PC-9 (cell line): ENCODE measurements at regions of chr13 and their contacts with region 1.

Region 1: DNA sequence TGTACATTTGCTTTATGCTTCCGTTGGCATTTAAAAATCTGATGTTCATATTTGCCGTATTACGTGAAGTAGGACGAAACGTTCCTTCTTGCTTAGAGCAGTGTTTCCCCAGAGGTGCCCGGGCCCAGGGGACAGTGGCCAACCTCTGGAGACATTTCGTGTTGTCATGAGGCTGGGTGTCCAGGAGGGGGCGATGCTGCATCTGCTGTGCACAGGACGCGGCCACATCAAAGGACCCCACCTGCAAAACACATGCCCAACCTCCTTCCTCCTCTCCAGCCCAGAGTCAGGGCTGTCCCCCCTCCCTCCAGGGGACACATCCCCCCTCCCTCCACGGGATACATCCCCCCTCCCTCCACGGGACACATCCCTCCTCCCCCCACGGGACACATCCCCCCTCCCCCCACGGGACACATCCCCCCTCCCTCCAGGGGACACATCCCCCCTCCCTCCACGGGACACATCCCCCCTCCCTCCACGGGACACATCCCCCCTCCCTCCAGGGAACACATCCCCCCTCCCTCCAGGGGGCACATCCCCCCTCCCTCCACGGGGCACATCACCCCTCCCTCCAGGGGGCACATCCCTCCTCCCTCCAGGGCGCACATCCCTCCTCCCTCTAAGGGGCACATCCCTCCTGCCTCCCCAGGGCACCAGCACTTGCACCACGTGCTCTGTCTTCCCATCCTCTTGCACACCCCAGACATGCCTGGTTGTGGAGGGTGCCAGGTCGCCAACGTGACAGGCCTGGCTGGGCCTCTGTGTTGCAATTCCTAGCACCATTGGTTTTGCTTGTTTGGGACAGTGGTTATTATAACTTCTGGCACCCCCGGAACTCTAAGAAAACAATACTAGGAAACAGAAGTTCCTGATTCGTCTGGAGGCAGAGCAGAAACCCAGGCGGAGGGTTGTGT is 46.7 kb downstream of the GAS6 start:
- DNase-seq: peak; percentile 68 to 83
- H3K4me3 ChIP-seq: no peak overlapping the region
- H3K27ac ChIP-seq: no peak overlapping the region
- H3K4me1 ChIP-seq: peaks cover 41% of the 10 kb centered on the region
- H3K27me3 ChIP-seq: no peaks in the 10 kb centered on the region
- CTCF ChIP-seq: peak; percentile 92

Region 2: DNA sequence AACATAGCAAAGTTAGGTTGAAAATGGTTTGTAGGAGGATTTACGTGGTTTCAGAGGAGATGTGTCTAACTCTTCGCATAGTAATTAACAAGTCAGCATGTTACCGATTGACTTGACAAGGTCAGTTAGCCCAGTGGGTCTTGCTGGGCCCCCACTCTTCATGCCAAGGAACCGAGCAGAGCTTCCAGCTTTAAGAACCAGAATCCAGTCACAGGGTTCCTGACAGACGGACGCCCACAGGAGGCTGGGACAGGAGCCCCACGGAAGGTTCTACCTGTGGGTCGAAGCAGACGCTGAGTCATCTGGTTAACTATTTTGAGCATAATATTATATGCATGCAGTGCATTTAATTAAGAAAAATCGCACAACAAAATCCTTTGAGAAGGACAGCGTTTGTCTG is 54.7 kb before region 1 on chr13:
- CTCF ChIA-PET with region 1: no interaction called
- POLR2A ChIA-PET with region 1: no interaction called
- intact Hi-C with region 1: no loop called
- DNase-seq: no peak
- H3K4me3 ChIP-seq: no peak overlapping the region
- H3K27ac ChIP-seq: no peak overlapping the region
- H3K4me1 ChIP-seq: 0 out of 2 replicates have a peak, but pooled peaks cover 7% of the 10 kb centered on the region
- H3K27me3 ChIP-seq: peaks cover 79% of the 10 kb centered on the region
- CTCF ChIP-seq: no peak

Region 3: DNA sequence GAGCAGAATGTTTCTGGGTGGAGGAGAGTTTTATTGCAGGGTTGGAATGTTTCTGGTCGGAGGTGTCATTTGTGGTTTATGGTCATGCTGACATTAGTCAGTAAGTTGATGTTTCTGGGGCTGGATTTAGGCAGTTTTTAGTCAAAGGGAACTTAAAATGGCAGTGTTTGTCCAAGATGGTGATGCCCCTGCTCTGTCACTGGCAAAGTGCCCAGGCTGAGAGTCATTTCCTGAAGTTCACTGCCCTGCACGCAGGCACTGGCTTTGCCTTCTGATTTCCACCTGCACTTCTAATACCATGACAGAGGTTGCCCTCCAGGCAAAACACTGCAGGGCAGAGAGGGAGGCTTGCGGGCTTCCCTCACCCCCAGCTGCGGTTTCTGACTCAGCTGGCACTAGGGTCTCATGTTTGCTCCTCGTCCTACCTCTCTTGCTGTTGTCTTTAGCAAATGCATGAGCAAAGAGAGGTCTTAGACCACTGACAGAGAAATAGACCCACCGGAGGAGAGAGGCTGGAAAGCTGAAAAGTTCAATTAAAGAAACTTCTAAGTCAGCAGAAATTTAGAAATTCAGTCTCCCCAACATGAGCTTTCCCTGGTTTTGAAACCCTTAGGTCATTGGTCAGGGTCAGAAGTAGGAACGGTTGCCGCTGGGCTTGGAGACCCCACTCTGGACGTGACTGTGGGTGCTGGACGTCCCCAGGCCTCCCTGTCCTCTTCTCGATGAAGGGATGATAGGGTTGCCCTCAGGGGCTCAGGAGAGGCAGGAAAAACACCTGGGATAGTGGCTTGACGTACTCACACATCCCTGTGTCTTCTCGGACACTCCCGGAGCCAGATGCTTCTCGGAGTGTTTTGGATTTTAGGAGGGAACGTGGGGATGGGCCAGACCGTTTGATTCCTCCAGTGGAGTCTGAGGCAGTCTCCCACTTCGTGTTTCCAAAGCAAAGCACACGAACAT is 31.9 kb before region 1 on chr13:
- CTCF ChIA-PET with region 1: no interaction called
- POLR2A ChIA-PET with region 1: no interaction called
- intact Hi-C with region 1: loop called (anchors 2 kb)
- DNase-seq: peak; percentile 78 to 88
- H3K4me3 ChIP-seq: peak overlapping the region; percentile 12; the same call in 1 of the 2 replicates
- H3K27ac ChIP-seq: peak overlapping the region; percentile 62
- H3K4me1 ChIP-seq: peaks cover 29% of the 10 kb centered on the region
- H3K27me3 ChIP-seq: 0 out of 2 replicates have a peak, but pooled peaks cover 4% of the 10 kb centered on the region
- CTCF ChIP-seq: no peak

Region 4: GRCh38 chr13:113863436-113864272 is 46.5 kb after region 1 on chr13 and contains the start of gene GAS6:
- CTCF ChIA-PET with region 1: no interaction called
- POLR2A ChIA-PET with region 1: interaction called, 3 read pairs
- intact Hi-C with region 1: loop called (anchors 5 kb)
- DNase-seq: peak in 1 of 2 experiments; percentile 60
- H3K4me3 ChIP-seq: peak within 1 kb of the TSS; percentile 57
- H3K27ac ChIP-seq: no peak within 1 kb of the TSS
- H3K4me1 ChIP-seq: peaks cover 13% of the 10 kb centered on the region; the same call in 1 of the 2 replicates
- H3K27me3 ChIP-seq: peaks cover 10% of the 10 kb centered on the region; the same call in 1 of the 2 replicates
- CTCF ChIP-seq: no peak; the same call in 1 of the 2 replicates
- total RNA-seq, gene GAS6: 92.9 and 93.8 TPM in 2 replicates

Region 5: DNA sequence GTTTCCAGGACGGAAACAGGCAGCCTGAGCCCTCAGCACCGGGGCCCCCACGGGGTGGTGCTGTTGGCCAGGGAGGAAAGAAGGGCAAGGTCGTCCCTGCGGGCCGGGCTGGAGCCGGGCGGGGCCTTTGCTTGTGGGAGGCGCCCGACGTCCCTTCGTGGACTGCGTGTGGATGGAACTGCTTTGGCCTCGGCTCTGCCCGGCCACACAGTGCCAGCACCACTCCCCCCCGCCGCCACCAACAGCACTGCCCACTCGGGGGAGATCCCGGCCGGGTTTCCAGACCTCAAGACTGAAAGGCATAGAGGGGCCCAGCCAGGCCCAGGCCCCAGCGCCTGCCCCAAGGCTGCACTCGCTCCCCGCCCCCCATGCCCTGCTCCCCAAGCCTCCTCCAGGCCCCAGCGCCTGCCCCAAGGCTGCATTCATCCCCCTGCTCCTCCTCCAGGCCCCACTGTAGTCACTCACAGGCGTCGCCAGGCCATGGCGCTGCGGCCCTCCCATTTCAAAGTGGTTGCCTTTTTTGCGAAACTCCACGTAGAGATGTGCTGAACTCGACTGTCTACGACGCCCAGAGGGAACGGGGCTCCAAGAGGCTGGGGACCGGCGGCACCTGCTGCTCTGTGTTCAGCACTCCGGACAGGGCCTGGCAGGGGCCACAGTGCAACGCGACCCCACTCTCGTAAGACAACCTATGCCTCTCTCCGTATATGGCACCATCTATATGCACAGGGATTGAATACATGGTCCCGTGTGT is 134.2 kb after region 1 on chr13:
- CTCF ChIA-PET with region 1: no interaction called
- POLR2A ChIA-PET with region 1: no interaction called
- intact Hi-C with region 1: loop called (anchors 1 kb)
- DNase-seq: peak; percentile 60 to 86
- H3K4me3 ChIP-seq: no peak overlapping the region
- H3K27ac ChIP-seq: no peak overlapping the region
- H3K4me1 ChIP-seq: no peaks in the 10 kb centered on the region
- H3K27me3 ChIP-seq: no peaks in the 10 kb centered on the region
- CTCF ChIP-seq: peak; percentile 89

Region 6: DNA sequence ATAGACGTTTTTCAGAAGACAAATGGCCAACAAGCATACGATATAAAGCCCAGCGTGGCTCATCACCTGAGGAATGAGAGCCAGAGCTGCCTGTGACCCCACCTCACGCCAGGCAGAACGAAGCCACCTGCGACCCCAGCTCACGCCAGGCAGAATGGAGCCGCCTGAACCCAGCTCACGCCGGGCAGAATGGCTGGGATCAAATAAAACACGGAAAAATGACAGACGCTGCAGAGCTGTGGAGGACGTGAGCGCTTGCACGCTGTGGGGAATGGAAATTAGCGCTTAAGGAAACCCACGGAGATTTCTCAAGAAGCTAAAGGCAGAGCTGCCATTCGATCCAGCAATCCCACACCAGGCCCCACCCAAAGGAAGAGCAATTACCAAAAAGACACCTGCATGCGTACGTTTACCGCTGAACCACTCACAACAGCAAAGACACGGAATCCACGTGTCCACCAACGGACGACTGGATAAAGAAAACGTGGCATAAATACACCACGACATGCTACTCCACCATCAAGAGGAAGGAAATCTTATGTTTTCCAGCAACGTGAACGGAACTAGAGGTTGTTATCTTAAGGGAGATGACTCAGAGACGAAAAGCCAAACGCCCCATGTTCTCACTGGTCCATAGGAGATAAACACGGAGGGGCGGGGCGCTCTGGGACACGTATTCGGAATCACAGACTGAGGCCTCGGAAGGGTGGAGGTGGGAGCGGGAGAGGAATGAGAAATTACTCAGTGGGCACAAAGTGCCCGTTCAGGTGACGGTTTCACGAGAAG is 187.4 kb after region 1 on chr13:
- CTCF ChIA-PET with region 1: no interaction called
- POLR2A ChIA-PET with region 1: no interaction called
- intact Hi-C with region 1: no loop called
- DNase-seq: peak in 1 of 2 experiments; percentile 53
- H3K4me3 ChIP-seq: no peak overlapping the region
- H3K27ac ChIP-seq: no peak overlapping the region
- H3K4me1 ChIP-seq: no peaks in the 10 kb centered on the region
- H3K27me3 ChIP-seq: no peaks in the 10 kb centered on the region
- CTCF ChIP-seq: no peak